ENCODE measurements at regions of chr2 and their contacts with region 1.

Region 1: GRCh38 chr2:26982102-26982742 is 11.8 kb downstream of the MAPRE3 start:
- DNase-seq: peak; percentile 76
- H3K4me3 ChIP-seq: no peak overlapping the region
- H3K27ac ChIP-seq: peak overlapping the region in 1 of 2 experiments; percentile 56; a peak in 1 of 4 replicates
- H3K4me1 ChIP-seq: peaks cover 0 to 25% of the 10 kb centered on the region in 2 experiments; a peak in 1 of 4 replicates
- H3K27me3 ChIP-seq: no peaks in the 10 kb centered on the region
- CTCF ChIP-seq: peak; percentile 38; the same call in 1 of the 2 replicates
- EP300 ChIP-seq: peak in 1 of 2 experiments; percentile 24; a peak in 1 of 4 replicates
- RAD21 ChIP-seq: peak; percentile 26; the same call in 1 of the 2 replicates

Region 2: DNA sequence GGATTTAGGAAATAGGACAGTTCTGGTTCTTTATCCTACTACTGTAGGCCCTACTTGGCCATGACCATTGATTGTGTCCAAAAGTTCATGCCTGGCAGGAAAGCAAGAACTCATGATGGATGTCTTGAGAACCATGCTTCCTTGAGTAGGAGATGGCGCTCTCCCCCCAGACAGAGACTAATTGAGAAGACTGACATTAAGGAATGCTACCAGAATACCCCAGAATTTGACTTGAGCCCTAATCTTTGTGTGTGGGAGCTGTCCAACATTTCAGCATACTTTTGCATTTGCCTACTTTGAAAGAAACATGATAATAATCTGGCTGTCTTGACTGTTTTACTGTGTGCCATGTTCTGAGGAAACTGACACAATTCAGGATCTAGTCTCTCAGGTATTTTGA is 11.5 kb after region 1 on chr2:
- CTCF ChIA-PET with region 1: interaction called, 33 read pairs
- POLR2A ChIA-PET with region 1: no interaction called
- DNase-seq: no peak
- H3K4me3 ChIP-seq: no peak overlapping the region
- H3K27ac ChIP-seq: no peak overlapping the region
- H3K4me1 ChIP-seq: peaks cover 0 to 4% of the 10 kb centered on the region in 2 experiments; a peak in 1 of 4 replicates
- H3K27me3 ChIP-seq: no peaks in the 10 kb centered on the region
- CTCF ChIP-seq: no peak
- EP300 ChIP-seq: no peak
- RAD21 ChIP-seq: no peak

Region 3: DNA sequence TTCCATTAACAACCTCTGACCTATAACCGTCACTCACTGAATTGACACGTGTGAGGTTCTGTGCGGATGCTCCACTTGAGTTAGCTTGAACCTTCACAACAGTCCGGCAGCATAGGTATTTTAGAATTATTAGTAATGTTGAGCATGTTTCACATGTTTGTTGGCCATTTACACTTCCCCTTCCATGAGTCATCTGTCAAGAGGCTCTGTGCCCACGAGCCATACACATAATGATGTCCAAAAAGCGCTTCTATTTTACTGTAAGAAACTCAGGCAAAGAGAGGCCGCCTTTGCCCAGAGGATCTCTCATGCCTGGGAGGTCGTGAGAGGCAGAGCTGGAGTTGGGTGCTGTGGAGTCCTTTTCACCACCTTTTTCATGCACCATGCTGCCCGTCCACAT is 21.6 kb after region 1 on chr2:
- CTCF ChIA-PET with region 1: interaction called, 22 read pairs
- POLR2A ChIA-PET with region 1: no interaction called
- DNase-seq: no peak
- H3K4me3 ChIP-seq: no peak overlapping the region
- H3K27ac ChIP-seq: no peak overlapping the region
- H3K4me1 ChIP-seq: 0 out of 4 replicates have a peak, but pooled peaks cover 0 to 7% of the 10 kb centered on the region in 2 experiments
- H3K27me3 ChIP-seq: no peaks in the 10 kb centered on the region
- CTCF ChIP-seq: no peak
- EP300 ChIP-seq: no peak
- RAD21 ChIP-seq: no peak

Region 4: DNA sequence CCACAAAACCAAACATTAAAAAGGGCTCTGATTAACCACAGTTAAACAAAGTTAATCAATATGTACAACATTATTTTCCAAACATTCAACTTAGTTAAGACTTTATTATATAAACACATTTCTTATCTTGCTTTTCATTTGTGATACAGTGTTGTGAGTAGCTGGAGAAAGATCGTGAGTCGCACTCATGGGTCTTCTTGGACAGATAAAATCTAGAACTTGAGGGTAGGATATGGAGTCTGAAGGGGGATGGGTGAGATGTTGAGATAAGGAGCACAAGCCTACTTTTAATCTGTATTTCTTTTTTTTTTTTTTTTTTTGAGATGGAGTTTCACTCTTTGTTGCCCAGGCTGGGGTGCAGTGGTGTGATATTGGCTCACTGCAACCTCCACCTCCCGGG is 27.9 kb after region 1 on chr2:
- CTCF ChIA-PET with region 1: interaction called, 74 read pairs
- POLR2A ChIA-PET with region 1: no interaction called
- DNase-seq: no peak
- H3K4me3 ChIP-seq: no peak overlapping the region
- H3K27ac ChIP-seq: no peak overlapping the region
- H3K4me1 ChIP-seq: peaks cover under 1 to 2% of the 10 kb centered on the region in 2 experiments; a peak in 1 of 4 replicates
- H3K27me3 ChIP-seq: no peaks in the 10 kb centered on the region
- CTCF ChIP-seq: no peak
- EP300 ChIP-seq: no peak
- RAD21 ChIP-seq: no peak